Activated CD4-positive, alpha-beta T cell treated with anti-CD3 and anti-CD28 coated beads for 36 hours (primary cell): ENCODE measurements at regions of chr2 and their contacts with region 1.

Region 1: DNA sequence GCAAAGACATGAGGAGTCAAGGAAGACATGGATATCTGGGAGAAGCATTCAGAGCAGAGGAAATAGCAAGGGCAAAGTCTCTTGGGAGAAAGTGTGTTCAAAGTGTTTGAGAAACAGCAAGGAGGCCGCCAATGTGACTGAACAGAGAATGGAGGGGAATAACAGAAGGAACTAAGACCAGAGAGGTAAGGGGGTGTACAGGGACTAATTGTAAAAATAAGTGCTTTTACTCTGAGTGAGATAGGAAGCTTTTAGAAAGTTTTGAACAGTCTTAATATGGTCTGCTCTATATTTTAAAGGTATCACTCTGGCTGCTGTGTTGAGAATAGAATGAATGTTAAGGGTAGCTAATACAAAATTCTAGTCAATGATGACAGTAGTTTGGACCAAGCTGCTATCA is 6.8 kb upstream of the CREB1 start:
- DNase-seq: no peak
- ATAC-seq: no peak
- H3K4me3 Mint-ChIP-seq: no peak overlapping the region
- H3K27ac Mint-ChIP-seq: no peak overlapping the region
- H3K4me1 Mint-ChIP-seq: peaks cover 49% of the 10 kb centered on the region
- H3K27me3 Mint-ChIP-seq: no peaks in the 10 kb centered on the region

Region 2: GRCh38 chr2:207164006-207164831 is 358.8 kb before region 1 on chr2:
- CTCF ChIA-PET with region 1: no interaction called
- POLR2A ChIA-PET with region 1: no interaction called
- intact Hi-C with region 1: no loop called
- DNase-seq: peak; percentile 34
- ATAC-seq: no peak
- H3K4me3 Mint-ChIP-seq: peak overlapping the region; percentile 90
- H3K27ac Mint-ChIP-seq: peak overlapping the region; percentile 77
- H3K4me1 Mint-ChIP-seq: peaks cover 51% of the 10 kb centered on the region
- H3K27me3 Mint-ChIP-seq: no peaks in the 10 kb centered on the region

Region 3: DNA sequence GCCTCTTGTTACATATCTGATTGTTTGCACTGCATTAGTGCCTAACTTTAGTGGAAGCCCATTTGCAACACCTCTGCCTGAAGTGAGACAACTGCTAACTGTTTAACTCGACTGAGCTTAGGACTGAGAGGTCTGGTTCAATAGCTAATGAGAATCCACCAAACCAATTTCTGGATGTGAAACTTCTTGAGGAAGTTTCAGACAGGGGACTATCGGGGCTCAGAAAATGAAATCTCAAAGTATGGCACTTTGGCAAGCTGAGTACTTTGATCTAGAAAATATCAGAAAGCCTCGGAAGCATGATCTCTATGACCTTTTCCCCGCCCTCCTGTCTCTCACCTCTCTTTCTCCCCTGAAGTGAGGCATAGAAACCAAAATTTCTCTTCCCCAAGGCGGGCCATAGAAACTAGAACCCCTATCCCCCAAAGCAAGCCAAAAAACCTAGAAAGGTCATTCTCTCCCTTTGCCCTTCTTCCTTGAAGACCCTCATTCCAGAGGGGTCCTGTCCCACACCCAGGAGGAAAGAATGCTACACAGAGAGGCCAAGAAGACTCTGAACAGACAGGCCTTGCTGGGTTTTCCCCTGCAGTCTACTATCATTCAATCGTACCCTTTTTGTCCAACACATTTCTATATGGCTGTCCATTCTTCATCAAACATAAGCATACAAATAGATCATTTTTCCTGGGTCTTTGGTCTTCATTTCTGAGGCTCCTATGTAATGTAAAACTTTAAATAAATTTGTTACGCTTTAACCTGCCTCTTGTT is 62.8 kb before region 1 on chr2:
- CTCF ChIA-PET with region 1: no interaction called
- POLR2A ChIA-PET with region 1: no interaction called
- intact Hi-C with region 1: no loop called
- DNase-seq: no peak
- ATAC-seq: no peak
- H3K4me3 Mint-ChIP-seq: no peak overlapping the region
- H3K27ac Mint-ChIP-seq: no peak overlapping the region
- H3K4me1 Mint-ChIP-seq: peaks cover 20% of the 10 kb centered on the region
- H3K27me3 Mint-ChIP-seq: no peaks in the 10 kb centered on the region

Region 4: GRCh38 chr2:207478572-207478971 is 44.4 kb before region 1 on chr2:
- CTCF ChIA-PET with region 1: interaction called, 3 read pairs
- POLR2A ChIA-PET with region 1: no interaction called
- intact Hi-C with region 1: loop called in 1 of 2 experiments (anchors 2 kb)
- DNase-seq: no peak
- ATAC-seq: no peak
- H3K4me3 Mint-ChIP-seq: no peak overlapping the region
- H3K27ac Mint-ChIP-seq: no peak overlapping the region
- H3K4me1 Mint-ChIP-seq: peaks cover 44% of the 10 kb centered on the region
- H3K27me3 Mint-ChIP-seq: no peaks in the 10 kb centered on the region